ENCODE measurements at regions of chr1 and their contacts with region 1.

Region 1: DNA sequence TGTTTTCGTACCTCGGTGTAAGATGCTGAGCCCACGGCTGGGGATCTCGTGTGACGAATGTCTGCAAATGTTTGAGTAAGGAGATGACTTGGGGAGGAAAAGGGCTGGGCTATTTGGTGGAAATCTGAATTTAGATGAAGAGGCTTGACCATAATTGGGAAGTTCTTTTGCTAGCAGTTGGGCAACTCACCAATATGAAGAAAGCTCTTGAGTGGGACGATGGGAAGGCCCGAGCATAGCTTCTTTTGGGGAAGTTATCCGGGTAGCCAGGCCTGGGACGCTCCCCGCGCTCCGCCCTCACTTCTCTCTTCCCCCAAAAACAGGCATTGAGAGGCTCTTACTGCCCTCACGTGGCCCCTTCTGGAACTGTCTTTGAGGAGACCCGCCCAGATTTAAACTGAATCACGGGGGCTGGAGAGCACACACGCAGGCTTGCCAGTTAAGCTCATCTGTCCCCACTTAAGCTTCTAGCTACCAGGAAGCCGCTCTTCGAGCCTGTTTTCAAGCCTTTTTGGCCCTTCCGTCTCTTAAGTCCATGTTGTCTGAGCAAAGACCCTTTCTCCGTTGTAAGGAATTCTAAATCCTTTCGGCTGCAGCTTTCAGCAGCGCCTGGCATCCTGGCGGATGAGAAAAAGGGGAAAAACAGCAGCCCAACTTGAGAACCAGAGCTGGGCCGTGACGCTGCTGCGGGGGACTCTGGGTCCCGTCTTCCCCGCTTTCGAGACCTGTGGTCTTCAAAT is 93.1 kb downstream of the NID1 start:
- DNase-seq: peak; percentile 80
- H3K4me3 Mint-ChIP-seq: peak overlapping the region; percentile 79
- H3K27ac Mint-ChIP-seq: peak overlapping the region; percentile 84
- H3K4me1 Mint-ChIP-seq: peaks cover 17% of the 10 kb centered on the region
- H3K27me3 Mint-ChIP-seq: peaks cover 11% of the 10 kb centered on the region

Region 2: GRCh38 chr1:235513495-235514366 is 458.0 kb before region 1 on chr1:
- intact Hi-C with region 1: loop called (anchors 1 kb)
- DNase-seq: no peak
- H3K4me3 Mint-ChIP-seq: no peak overlapping the region
- H3K27ac Mint-ChIP-seq: no peak overlapping the region
- H3K4me1 Mint-ChIP-seq: peaks cover 12% of the 10 kb centered on the region
- H3K27me3 Mint-ChIP-seq: peaks cover 22% of the 10 kb centered on the region

Region 3: GRCh38 chr1:235802947-235803346 is 168.8 kb before region 1 on chr1:
- intact Hi-C with region 1: loop called (anchors 5 kb)
- DNase-seq: no peak
- H3K4me3 Mint-ChIP-seq: no peak overlapping the region
- H3K27ac Mint-ChIP-seq: no peak overlapping the region
- H3K4me1 Mint-ChIP-seq: peaks cover 6% of the 10 kb centered on the region
- H3K27me3 Mint-ChIP-seq: no peaks in the 10 kb centered on the region

Region 4: GRCh38 chr1:235866913-235867845 is 104.6 kb before region 1 on chr1:
- intact Hi-C with region 1: loop called (anchors 1 kb)
- DNase-seq: peak; percentile 99
- H3K4me3 Mint-ChIP-seq: peak overlapping the region; percentile 98
- H3K27ac Mint-ChIP-seq: peak overlapping the region; percentile 98
- H3K4me1 Mint-ChIP-seq: peaks cover 57% of the 10 kb centered on the region
- H3K27me3 Mint-ChIP-seq: no peaks in the 10 kb centered on the region

Region 5: GRCh38 chr1:235952950-235953615 is 18.7 kb before region 1 on chr1:
- intact Hi-C with region 1: loop called (anchors 1 kb)
- DNase-seq: peak; percentile 36
- H3K4me3 Mint-ChIP-seq: peak overlapping the region; percentile 19
- H3K27ac Mint-ChIP-seq: peak overlapping the region; percentile 40
- H3K4me1 Mint-ChIP-seq: peaks cover 34% of the 10 kb centered on the region
- H3K27me3 Mint-ChIP-seq: peaks cover 30% of the 10 kb centered on the region

Region 6: DNA sequence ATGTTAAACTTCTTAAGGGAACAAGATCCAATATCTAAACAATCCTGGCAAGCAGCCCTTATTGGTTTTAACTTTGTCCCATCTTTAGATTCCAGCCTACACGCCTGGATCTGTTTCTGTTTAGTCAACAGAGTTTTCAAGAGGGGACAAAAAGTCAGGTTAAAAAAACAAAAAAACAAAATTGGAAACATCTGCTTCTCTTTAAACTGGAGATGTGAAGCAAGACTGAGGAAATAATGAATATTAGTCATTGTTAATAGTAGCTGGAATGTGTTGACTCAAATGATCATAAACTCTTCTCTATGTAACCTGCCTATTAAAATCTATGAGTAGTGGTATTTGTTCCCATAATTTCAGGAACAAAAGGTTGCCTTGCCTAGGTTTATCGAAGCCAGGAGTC is 38.1 kb after region 1 on chr1:
- intact Hi-C with region 1: no loop called
- DNase-seq: no peak
- H3K4me3 Mint-ChIP-seq: no peak overlapping the region
- H3K27ac Mint-ChIP-seq: no peak overlapping the region
- H3K4me1 Mint-ChIP-seq: no peaks in the 10 kb centered on the region
- H3K27me3 Mint-ChIP-seq: peaks cover 3% of the 10 kb centered on the region